Activated CD4-positive, alpha-beta memory T cell treated with anti-CD3 and anti-CD28 coated beads, Interleukin-2, amount 10 ng/mL, durations not matched to agents 7 days and 5 days (primary cell): ENCODE measurements at regions of chr17 and their contacts with region 1.

Region 1: DNA sequence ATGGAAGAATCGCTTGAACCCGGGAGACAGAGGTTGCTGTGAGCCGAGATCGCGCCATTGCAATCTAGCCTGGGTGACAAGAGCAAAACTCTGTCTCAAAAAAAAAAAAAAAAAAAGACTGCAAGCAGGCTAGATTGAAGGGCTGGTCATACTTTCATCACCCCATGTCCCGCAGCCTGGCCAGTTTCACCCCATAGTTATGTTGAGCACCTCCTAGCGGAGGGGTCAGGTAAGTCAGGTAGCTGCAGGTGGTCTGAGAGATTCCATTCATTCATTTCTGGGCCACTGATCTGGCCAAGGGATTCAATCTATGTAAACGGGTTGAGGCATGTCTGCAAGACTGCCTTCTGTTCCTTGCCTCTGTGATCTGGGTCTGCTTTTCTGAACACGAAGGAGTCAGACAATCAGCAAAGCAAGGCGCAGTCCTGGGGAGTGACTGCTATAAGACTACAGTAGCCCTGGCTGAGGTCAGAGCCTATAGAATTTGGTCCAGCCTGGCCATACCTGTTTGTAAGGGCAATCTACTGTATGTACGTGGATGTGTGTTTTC is 23.6 kb upstream of the BPTF start:
- DNase-seq: no peak
- H3K4me3 Mint-ChIP-seq: no peak overlapping the region
- H3K27ac Mint-ChIP-seq: no peak overlapping the region
- H3K4me1 Mint-ChIP-seq: peaks cover 5% of the 10 kb centered on the region
- H3K27me3 Mint-ChIP-seq: peaks cover 5% of the 10 kb centered on the region

Region 2: GRCh38 chr17:67672592-67673335 is 128.9 kb before region 1 on chr17:
- CTCF ChIA-PET with region 1: no interaction called
- POLR2A ChIA-PET with region 1: no interaction called
- DNase-seq: no peak
- H3K4me3 Mint-ChIP-seq: no peak overlapping the region
- H3K27ac Mint-ChIP-seq: no peak overlapping the region
- H3K4me1 Mint-ChIP-seq: no peaks in the 10 kb centered on the region
- H3K27me3 Mint-ChIP-seq: no peaks in the 10 kb centered on the region

Region 3: DNA sequence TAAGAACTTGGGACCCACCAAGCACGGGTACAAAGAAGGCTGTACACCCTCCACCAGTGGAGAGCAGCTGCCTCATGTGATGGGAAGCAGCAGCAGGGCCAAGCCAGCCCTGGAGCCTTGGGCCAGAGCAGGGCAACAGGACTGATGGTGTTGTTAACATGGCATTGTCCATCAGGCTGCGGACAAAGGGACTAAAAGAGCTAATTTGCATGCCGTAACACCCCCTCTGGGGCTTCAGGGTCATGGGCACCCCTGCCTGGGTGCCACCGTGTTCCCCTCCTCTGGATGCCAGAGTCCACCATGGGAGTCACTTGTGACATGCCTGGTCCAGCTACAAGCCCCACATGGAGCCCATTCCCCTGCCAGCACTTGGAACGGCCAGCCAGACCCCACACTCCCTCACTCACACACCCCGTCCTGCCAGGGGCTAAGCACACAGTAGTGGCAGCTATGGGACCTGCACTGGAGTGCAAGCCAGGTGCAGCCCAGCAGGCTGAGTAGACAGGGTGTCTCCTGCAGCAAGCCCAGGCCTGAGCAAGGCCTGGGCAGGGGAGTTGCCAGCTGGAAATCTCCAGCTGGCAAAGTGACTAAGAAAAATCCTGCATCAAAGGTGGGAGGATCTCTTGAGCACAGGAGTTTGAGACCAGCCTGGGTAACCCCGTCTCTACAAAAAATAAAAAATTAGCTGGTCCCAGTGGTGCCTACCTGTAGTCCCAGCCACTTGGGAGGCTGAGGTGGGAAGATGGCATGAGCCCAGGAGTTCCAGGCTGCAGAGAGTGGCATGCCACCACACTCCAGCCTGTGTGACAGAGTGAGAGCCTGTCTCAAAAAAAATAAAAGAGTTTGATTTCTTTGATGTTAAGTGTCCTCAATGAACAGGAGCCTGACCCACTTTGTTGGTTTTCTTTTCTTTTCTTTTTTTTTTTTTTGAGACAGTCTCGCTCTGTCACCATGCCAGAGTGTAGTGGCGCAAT is 50.3 kb before region 1 on chr17:
- CTCF ChIA-PET with region 1: no interaction called
- POLR2A ChIA-PET with region 1: no interaction called
- DNase-seq: no peak
- H3K4me3 Mint-ChIP-seq: no peak overlapping the region
- H3K27ac Mint-ChIP-seq: no peak overlapping the region
- H3K4me1 Mint-ChIP-seq: peaks cover 5% of the 10 kb centered on the region
- H3K27me3 Mint-ChIP-seq: no peaks in the 10 kb centered on the region

Region 4: DNA sequence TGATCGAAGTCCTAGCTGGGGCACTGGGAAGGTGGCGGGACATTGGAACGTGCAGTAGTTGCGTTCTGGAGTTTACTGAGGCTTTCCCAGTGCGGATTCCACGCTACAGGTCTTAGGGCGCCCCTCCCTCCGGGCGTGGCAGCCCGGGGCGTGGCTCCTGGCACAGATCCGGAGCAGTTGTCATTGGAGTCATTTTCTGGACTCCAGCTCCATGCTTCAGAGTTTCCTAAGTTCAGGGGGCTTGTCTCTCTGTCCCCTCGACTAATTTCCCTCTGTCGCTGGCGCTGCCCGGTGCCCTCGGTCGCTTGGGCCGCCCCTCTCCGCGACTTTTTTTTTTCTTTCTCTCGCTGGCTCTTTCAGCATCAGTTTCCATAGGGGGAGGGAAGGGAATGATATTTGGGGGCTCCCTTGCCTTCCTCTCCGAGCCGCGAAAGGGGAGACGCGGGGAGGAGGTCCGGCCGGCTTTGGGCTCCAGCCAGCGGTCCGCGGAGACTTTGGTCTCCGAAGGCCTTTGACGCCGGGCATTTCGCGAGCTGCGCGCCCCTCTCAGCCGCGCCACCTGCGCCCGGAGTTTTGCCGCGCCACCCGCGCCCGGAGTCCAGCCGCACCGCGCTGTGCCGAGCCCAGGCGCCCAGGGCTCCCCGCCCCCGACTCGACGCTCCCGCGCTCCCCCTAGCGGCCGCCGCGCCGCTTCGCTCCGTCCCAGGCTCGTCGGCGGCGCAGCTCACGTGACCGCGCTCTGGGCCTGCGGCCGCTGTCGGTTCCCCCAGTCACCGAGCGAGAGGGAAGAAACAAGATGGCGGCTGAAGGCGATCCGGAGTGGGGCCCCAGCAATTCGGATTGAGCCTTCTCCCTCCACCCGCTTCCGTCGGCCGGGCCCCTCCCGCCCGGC is 23.3 kb after region 1 on chr17 and contains the start of gene BPTF:
- CTCF ChIA-PET with region 1: interaction called, 12 read pairs
- POLR2A ChIA-PET with region 1: interaction called, 3 read pairs
- DNase-seq: peak; percentile 93
- H3K4me3 Mint-ChIP-seq: peak within 1 kb of the TSS; percentile 99
- H3K27ac Mint-ChIP-seq: peak within 1 kb of the TSS; percentile 97
- H3K4me1 Mint-ChIP-seq: peaks cover 30% of the 10 kb centered on the region
- H3K27me3 Mint-ChIP-seq: peaks cover 9% of the 10 kb centered on the region
- total RNA-seq, gene BPTF: 92.9 to 94.5 TPM